ENCODE measurements at regions of chr18 and their contacts with region 1.

Region 1: DNA sequence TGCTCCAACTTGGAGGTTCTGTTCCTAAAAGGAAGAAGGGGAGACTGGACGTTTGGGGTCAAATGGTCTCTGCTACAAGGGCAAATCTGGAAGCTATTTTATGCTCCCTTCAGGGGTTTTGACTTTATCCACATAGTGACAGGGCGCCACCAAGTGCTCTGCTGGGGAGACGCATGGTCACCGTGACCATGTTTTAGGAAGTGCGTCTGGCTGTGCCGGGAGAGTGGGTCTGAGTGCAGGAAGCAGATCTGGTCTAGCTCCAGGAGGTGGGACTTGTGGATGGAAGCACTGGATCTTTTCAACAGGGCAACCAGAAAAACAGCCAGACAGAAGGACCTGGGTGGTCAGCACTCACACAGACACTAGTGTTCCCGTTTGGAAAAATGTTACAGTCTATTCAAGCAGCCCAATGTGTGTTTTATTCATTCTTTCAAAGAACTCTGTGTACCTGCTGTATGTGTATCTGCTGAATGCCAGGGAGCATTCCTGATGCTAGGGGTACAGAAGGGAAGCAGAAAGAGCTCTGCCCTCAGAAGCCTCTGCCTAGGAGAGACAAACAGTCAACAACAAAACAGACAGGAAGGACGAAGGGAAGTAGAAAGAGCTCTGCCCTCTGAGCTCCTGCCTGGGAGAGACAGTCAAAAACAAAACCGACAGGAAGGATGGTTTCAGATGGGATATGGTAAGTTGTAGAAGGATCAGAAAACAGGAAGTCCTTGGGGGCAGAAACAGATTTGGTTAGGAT is 14.3 kb downstream of the IMPA2 start:
- DNase-seq: no peak
- H3K4me3 ChIP-seq: no peak overlapping the region
- H3K27me3 ChIP-seq: no peaks in the 10 kb centered on the region
- CTCF ChIP-seq: peak; percentile 89

Region 2: DNA sequence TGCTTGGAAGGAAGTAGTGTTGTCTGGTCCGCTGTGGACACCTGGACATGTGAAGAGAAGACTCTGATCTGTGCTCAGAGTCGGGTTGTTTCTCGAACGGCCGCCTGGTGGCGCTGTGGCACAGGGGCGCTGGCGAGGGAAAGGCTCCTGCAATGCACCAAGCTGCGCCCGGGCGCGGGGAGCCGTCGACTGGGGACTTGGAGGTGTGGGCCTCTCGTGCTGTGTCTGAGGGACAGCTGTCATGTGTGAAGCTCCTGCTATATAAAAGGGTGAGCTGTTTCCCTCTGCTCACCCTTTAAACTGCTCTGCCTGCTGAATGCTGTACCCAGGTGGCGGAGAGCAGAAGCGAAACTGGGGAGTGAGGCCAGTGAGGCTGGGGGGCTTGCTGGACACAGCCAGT is 262.6 kb before region 1 on chr18:
- CTCF ChIA-PET with region 1: interaction called, 28 read pairs
- POLR2A ChIA-PET with region 1: no interaction called
- DNase-seq: no peak
- H3K4me3 ChIP-seq: peak overlapping the region; percentile 25
- H3K27me3 ChIP-seq: peaks cover 4% of the 10 kb centered on the region; the same call in 1 of the 2 replicates
- CTCF ChIP-seq: peak; percentile 96

Region 3: DNA sequence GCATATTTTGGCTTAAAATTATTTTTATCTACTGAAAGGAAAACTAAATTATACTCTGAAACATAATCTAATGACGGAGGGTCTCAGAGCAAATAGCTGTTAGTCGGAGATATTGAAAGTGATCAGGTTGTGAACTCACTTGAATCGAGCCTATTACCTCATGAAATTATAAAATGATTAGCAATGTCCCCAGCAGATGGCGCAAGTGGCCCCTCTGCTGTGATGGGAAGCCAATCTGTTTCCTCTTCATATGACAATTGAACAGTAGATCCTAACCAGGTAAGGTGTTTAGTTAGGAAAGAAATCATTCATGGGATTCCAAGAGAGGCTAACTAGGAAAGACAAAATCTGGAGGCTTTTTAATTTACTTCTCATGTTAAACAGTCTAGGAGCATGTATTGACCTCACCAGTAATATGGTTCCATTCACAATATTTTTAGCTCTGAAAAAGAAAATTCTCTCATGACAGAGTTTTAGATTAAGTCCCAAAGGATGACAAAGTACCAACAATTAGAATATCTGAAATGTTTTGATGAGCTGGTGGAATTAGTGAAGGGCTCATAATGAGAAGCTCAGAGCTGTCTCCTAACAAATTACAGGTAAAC is 57.6 kb before region 1 on chr18:
- CTCF ChIA-PET with region 1: interaction called, 372 read pairs
- POLR2A ChIA-PET with region 1: no interaction called
- DNase-seq: no peak
- H3K4me3 ChIP-seq: no peak overlapping the region
- H3K27me3 ChIP-seq: no peaks in the 10 kb centered on the region
- CTCF ChIP-seq: peak; percentile 77

Region 4: DNA sequence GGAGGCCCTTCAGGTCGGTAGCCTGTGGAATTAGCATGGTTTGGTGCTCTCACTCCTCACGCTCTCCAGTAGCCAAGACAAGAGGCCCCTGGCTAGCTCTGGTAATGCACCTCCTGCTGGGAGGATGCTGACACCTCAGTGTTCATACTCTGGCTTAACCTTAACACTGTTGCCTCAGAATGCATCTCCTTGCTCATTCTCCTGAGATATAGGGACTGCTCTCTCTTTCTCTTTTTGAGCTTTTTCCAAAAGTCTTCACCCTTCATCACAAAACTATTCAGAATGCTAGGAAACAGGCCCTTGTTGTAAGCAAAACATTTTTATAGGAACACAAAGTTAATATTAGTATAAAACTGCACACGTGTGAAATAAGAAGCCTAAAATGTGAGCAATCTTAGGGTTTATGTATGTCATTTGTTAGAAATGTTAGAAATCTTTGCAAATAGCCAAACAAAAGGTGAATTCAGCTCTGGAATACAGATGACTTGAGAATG is 31.6 kb before region 1 on chr18:
- CTCF ChIA-PET with region 1: interaction called, 11 read pairs
- POLR2A ChIA-PET with region 1: no interaction called
- DNase-seq: peak; percentile 69
- H3K4me3 ChIP-seq: no peak overlapping the region
- H3K27me3 ChIP-seq: no peaks in the 10 kb centered on the region
- CTCF ChIP-seq: peak; percentile 54

Region 5: DNA sequence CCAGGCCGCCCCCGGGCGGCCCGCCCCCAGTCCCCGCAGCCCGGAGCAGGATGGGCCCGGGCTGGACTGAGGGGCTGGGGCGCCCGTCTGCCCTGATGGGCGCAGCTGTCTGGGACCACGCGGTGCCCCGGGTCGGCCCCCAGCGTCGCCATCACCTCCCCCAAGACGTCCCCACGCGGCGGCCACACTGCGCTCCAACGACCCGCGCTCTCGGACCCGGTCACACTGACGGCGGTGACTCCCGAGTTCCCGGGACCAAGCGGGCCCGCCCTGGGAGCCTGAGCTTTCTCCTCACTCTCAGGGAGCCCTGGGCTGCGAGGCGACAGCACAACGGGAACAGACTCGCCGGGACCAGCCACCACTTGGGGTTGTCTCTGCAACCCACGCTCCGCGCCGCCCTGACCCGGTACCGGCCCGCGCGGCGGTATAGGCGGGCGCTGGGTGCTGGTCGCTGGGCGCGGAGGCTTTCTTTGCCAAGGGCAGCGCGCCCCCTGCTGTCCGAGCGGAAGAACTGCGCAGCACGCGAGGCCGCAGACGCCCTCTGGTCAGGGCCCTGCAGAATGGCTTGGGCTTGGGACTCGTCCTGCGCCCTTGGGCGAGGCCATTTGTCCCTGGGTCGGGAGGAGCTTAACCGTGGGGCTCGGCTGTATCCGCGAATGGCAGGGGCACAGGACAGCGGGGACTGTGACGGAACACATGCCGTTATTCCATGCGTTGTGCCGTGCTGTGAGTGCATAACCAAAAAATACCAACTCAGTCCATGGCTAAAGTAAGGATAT is 43.2 kb after region 1 on chr18:
- CTCF ChIA-PET with region 1: interaction called, 22 read pairs
- POLR2A ChIA-PET with region 1: no interaction called
- DNase-seq: no peak
- H3K4me3 ChIP-seq: peak overlapping the region; percentile 52
- H3K27me3 ChIP-seq: no peaks in the 10 kb centered on the region; the same call in 1 of the 2 replicates
- CTCF ChIP-seq: peak; percentile 92

Region 6: GRCh38 chr18:13067124-13067523 is 1071.5 kb after region 1 on chr18:
- CTCF ChIA-PET with region 1: no interaction called
- POLR2A ChIA-PET with region 1: no interaction called
- DNase-seq: no peak
- H3K4me3 ChIP-seq: no peak overlapping the region
- H3K27me3 ChIP-seq: no peaks in the 10 kb centered on the region
- CTCF ChIP-seq: no peak

Region 7: DNA sequence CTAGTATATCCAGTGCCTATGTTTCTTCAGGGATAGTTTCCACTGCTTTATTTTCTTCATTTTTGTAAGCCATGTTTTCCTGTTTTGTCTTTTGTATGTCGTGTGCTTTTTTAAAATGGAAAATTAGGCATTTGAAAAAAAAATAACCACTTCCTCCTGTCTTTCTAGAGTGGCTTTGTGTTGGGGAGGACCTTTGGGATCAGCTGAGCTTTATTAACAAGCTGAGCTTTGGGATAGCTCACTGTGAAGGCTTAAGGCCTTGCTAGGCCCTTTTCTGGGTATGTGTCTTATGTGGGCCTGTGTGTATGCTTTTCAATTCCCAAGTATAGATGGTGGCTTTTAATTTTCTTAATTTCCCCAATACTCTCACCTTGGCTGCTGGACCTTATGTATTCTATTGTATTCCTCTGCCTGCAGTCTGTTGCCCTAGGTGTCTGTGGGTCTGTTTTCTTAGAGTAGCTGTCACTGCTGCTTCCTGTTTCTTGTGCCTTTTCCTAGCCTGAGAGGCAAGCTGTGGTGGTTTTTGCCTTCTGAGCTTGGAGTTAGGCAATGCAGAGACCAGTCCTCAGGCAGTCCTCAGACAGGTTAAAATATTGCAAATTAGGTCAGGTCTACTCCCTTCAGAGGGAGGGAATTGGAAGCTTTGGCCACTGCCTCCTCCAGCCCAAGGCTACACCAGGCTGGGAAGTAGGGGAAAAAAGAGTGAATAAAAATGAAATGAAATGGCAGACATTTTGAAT is 1357.6 kb after region 1 on chr18:
- CTCF ChIA-PET with region 1: no interaction called
- POLR2A ChIA-PET with region 1: no interaction called
- DNase-seq: no peak
- H3K4me3 ChIP-seq: no peak overlapping the region
- H3K27me3 ChIP-seq: no peaks in the 10 kb centered on the region
- CTCF ChIP-seq: no peak